Activated CD4-positive, alpha-beta memory T cell treated with anti-CD3 and anti-CD28 coated beads for 36 hours (primary cell): ENCODE measurements at regions of chr14 and their contacts with region 1.

Region 1: GRCh38 chr14:35826218-35826951 is at the start of gene BRMS1L:
- DNase-seq: peak; percentile 98
- H3K4me3 Mint-ChIP-seq: peak within 1 kb of the TSS; percentile 78
- H3K27ac Mint-ChIP-seq: peak within 1 kb of the TSS; percentile 93
- H3K4me1 Mint-ChIP-seq: peaks cover 23% of the 10 kb centered on the region
- H3K27me3 Mint-ChIP-seq: no peaks in the 10 kb centered on the region
- total RNA-seq, gene BRMS1L: 5.6 to 6.1 TPM

Region 2: GRCh38 chr14:35046048-35046741 is 780.2 kb before region 1 on chr14 and contains the start of gene FAM177A1:
- CTCF ChIA-PET with region 1: no interaction called
- POLR2A ChIA-PET with region 1: no interaction called
- intact Hi-C with region 1: loop called (anchors 2 kb)
- DNase-seq: peak; percentile 99
- H3K4me3 Mint-ChIP-seq: peak within 1 kb of the TSS; percentile 97
- H3K27ac Mint-ChIP-seq: peak within 1 kb of the TSS; percentile 98
- H3K4me1 Mint-ChIP-seq: peaks cover 28% of the 10 kb centered on the region
- H3K27me3 Mint-ChIP-seq: no peaks in the 10 kb centered on the region
- total RNA-seq, gene FAM177A1: 48.8 to 56.8 TPM

Region 3: DNA sequence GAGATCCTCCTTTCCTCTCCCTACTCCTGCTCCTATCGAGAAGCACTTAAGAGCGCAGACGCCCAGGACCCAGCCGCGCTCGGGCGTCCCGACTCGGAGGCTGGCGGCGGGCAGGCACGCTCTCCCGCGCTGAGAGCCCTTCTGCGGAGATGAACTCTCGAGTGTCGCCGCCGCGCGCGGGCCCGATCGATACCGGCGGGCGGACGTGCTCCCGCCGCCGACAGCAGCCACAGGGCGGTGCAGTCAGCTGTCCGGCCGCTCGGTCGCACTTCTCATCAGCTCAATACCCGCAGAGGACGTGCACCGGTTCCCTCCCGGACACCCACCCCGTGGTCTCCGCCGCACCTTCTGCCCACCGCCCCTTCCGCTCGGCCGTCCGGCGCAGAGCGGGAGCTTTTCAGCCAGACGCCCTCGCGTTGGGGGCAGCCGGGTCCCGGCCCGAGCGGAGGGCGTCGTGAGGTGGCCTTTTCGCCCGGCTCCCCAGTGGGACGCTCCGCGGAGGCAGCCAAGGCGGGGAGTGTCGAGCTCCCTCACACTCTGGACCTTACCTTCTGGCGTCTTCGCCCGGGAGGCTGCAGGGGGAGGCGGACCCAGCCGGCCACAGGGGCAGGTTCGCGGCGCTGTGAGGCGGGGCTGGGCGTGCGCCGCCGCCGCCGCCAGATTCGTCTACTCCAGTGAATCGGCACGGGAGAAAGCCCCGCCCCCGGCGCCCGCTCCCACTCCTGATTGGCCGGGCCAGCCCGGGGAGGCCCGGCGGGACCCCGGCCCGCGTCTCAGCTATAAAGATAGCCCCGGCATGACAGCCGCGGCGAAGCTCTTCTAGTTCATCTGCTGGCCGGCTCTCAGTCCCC is 292.8 kb before region 1 on chr14 and contains the start of gene INSM2:
- CTCF ChIA-PET with region 1: interaction called, 3 read pairs
- POLR2A ChIA-PET with region 1: interaction called, 6 read pairs
- intact Hi-C with region 1: loop called (anchors 1 kb)
- DNase-seq: peak; percentile 71
- H3K4me3 Mint-ChIP-seq: peak within 1 kb of the TSS; percentile 65
- H3K27ac Mint-ChIP-seq: no peak within 1 kb of the TSS
- H3K4me1 Mint-ChIP-seq: peaks cover 11% of the 10 kb centered on the region
- H3K27me3 Mint-ChIP-seq: peaks cover 35% of the 10 kb centered on the region
- total RNA-seq, gene INSM2: not detected

Region 4: GRCh38 chr14:35814371-35815005 is 11.9 kb before region 1 on chr14:
- CTCF ChIA-PET with region 1: interaction called, 22 read pairs
- POLR2A ChIA-PET with region 1: interaction called, 5 read pairs
- intact Hi-C with region 1: loop called (anchors 1 kb)
- DNase-seq: peak; percentile 83
- H3K4me3 Mint-ChIP-seq: no peak overlapping the region
- H3K27ac Mint-ChIP-seq: no peak overlapping the region
- H3K4me1 Mint-ChIP-seq: no peaks in the 10 kb centered on the region
- H3K27me3 Mint-ChIP-seq: no peaks in the 10 kb centered on the region

Region 5: DNA sequence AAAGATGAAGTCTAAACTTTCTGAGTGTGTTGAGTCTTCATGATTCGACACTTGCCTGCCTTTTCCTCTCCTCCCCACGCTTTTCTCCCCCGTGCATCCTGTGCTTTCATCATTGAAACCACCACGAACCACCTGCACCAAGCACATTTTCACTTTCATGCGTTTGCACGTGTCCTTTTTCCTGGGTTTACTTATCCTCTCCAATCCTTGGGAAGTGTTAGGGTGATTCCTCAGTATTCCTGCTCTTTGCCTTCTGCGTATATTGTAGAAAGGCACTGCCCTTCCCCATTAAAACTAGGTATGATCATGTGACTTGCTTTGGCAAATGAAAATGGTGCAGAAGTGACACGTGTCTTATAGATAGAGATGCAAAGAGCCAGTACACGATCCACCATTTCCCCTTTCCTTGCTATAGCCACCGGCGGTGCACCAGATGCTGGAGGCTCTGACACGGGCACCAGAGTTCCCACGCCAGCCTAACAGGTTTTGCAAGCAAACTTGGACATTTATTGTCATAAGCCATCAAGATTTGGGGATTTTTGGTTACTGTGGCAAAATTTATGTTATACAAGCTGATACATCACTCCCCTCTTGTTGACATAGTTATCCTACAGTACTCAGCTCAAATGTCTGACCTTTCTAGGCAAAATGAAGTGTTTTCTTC is 106.4 kb after region 1 on chr14:
- CTCF ChIA-PET with region 1: no interaction called
- POLR2A ChIA-PET with region 1: no interaction called
- intact Hi-C with region 1: loop called (anchors 1 kb)
- DNase-seq: peak; percentile 67
- H3K4me3 Mint-ChIP-seq: peak overlapping the region; percentile 54
- H3K27ac Mint-ChIP-seq: no peak overlapping the region
- H3K4me1 Mint-ChIP-seq: peaks cover 19% of the 10 kb centered on the region
- H3K27me3 Mint-ChIP-seq: no peaks in the 10 kb centered on the region

Region 6: GRCh38 chr14:36320200-36320896 is 494.0 kb after region 1 on chr14 and contains the start of gene MBIP:
- CTCF ChIA-PET with region 1: no interaction called
- POLR2A ChIA-PET with region 1: interaction called, 3 read pairs
- intact Hi-C with region 1: loop called (anchors 1 kb)
- DNase-seq: peak; percentile 95
- H3K4me3 Mint-ChIP-seq: peak within 1 kb of the TSS; percentile 89
- H3K27ac Mint-ChIP-seq: peak within 1 kb of the TSS; percentile 89
- H3K4me1 Mint-ChIP-seq: peaks cover 31% of the 10 kb centered on the region
- H3K27me3 Mint-ChIP-seq: peaks cover 9% of the 10 kb centered on the region
- total RNA-seq, gene MBIP: 25.5 to 27.3 TPM